ENCODE measurements at regions of chr15 and their contacts with region 1.

Region 1: GRCh38 chr15:59492389-59493377 is 54.7 kb downstream of the FAM81A start:
- DNase-seq: no peak
- ATAC-seq: peak; percentile 88

Region 2: GRCh38 chr15:58981808-58982475 is 510.7 kb before region 1 on chr15:
- intact Hi-C with region 1: loop called (anchors 2 kb)
- DNase-seq: no peak
- ATAC-seq: no peak

Region 3: GRCh38 chr15:59174835-59175831 is 317.6 kb before region 1 on chr15:
- intact Hi-C with region 1: loop called (anchors 5 kb)
- DNase-seq: no peak
- ATAC-seq: peak; percentile 85

Region 4: DNA sequence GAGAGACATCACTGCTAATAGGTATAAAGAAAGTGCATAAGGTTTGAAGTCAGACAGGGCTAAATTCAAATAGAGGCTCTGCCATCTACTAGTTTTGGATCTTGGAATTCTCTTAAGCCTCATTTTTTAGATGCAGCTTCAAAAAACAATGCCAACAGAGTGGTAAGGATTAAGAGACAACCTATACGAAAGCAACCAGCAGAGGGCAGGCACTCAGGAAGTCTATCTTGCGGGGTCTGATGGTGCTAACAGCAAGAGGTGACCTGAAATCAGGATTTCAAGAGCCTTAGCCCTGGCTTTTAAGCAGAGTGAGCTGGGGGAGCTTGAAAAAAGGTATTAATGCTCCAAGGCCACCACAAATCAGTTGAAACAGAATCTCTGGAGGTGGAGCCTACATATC is 245.3 kb before region 1 on chr15:
- intact Hi-C with region 1: loop called (anchors 1 kb)
- DNase-seq: no peak
- ATAC-seq: peak; percentile 71

Region 5: GRCh38 chr15:59372352-59373211 is 120.1 kb before region 1 on chr15 and contains the start of gene MYO1E:
- intact Hi-C with region 1: loop called (anchors 2 kb)
- DNase-seq: peak; percentile 91
- ATAC-seq: peak; percentile 99
- total RNA-seq, gene MYO1E: 37.6 TPM

Region 6: GRCh38 chr15:59437817-59438562 is 54.7 kb before region 1 on chr15 and contains the start of gene FAM81A:
- intact Hi-C with region 1: loop called (anchors 5 kb)
- DNase-seq: peak; percentile 92
- ATAC-seq: peak; percentile 94
- total RNA-seq, gene FAM81A: 11.0 TPM

Region 7: GRCh38 chr15:59528965-59529402 is 36.3 kb after region 1 on chr15:
- intact Hi-C with region 1: no loop called
- DNase-seq: peak; percentile 80
- ATAC-seq: peak; percentile 88

Measured in Right ventricle myocardium inferior (tissue), 1 donor.